ENCODE measurements at regions of chr15 and their contacts with region 1.

Region 1: GRCh38 chr15:76150971-76151598 is 91.3 kb downstream of the TMEM266 start:
- DNase-seq: peak; percentile 91
- H3K4me3 ChIP-seq: no peak overlapping the region
- H3K27ac ChIP-seq: peak overlapping the region; percentile 36
- H3K4me1 ChIP-seq: peaks cover 18% of the 10 kb centered on the region
- H3K27me3 ChIP-seq: no peaks in the 10 kb centered on the region
- CTCF ChIP-seq: peak; percentile 74 to 92

Region 2: DNA sequence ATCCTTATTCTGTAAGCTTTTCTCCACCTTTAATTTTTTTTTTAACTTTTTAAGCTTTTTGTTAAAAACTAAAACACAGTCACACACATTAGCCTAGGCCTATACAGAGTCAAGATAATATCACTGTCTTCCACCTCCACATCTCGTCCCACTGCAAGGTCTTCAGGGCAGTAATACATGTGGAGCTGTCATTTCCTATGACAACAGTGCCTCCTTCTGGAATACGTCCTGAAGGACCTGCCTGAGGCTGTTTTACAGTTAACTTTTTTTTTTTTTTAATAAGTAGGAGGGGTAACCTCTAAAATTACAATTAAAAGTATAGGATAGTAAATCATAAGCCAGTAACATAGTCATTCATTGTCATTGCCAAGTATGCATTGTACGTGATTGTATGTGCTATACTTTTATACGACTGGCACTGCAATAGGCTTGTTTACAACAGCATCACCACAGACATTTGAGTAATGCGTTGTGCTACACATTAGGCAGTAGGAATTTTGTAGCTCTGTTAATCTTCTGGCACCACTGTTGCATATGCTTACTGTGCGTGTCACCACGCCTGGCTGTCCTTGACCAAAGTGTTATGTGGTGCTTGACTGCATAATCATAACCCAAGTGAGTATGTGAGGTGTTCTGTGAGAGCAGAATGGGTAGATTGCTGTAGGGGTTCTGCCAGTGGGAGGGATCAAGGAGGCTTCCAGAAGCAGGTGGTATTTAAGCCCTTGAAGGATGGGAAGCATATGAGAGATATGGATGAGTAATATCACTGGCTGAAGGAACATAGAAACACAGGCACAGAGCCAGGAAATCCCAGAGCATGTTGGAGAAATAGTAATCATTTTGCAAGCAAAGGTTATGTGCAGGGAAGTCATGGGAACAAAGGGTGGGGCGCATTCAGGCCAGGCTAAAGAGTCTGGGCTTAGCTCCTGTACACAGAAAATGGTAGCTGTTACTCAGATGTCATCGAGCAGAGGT is 229.1 kb before region 1 on chr15:
- CTCF ChIA-PET with region 1: no interaction called
- dilution Hi-C with region 1: no loop called
- in situ Hi-C with region 1: loop called in 1 of 2 experiments (anchors 25 kb)
- intact Hi-C with region 1: loop called (anchors 5 kb)
- DNase-seq: peak; percentile 78
- H3K4me3 ChIP-seq: no peak overlapping the region
- H3K27ac ChIP-seq: no peak overlapping the region
- H3K4me1 ChIP-seq: peaks cover 29% of the 10 kb centered on the region
- H3K27me3 ChIP-seq: no peaks in the 10 kb centered on the region
- CTCF ChIP-seq: peak; percentile 32 to 33

Region 3: DNA sequence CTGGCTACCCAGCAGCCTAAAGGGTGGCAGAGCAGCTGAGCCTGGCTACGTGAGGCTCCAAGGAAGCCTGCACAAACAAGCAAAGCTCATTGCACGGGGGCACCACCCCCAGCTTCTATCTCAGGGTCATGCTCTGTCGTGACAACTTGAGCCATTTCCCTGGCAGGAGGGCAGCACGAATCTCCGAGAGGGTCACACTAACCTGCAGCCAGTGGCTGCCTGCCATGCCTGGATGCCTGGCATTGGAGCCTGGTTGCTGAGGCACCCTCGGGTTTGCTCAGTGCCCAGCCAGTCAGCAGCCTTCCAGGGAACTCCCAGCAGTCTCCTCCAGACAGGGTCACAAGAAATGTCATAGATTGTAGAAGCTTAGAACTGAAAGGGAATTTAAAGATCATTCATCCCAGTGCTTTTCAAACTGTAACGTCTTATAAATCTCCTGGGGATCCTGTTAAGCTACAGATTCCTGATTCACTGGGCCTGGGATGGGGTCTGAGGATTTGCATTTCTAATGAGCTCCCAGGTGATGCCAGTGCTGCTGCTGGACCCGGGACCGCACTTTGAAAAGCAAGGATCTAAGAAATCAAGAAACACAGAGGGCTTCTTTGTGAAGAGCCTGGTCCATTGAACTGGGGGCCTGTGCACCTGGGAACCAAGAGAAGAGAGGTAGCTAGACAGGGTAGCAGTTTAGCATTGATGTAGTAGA is 42.9 kb before region 1 on chr15:
- CTCF ChIA-PET with region 1: no interaction called
- dilution Hi-C with region 1: loop called (anchors 5 kb)
- in situ Hi-C with region 1: no loop called
- intact Hi-C with region 1: no loop called
- DNase-seq: no peak
- H3K4me3 ChIP-seq: no peak overlapping the region
- H3K27ac ChIP-seq: no peak overlapping the region
- H3K4me1 ChIP-seq: peaks cover 5% of the 10 kb centered on the region
- H3K27me3 ChIP-seq: no peaks in the 10 kb centered on the region
- CTCF ChIP-seq: no peak

Region 4: GRCh38 chr15:76177491-76178040 is 26.5 kb after region 1 on chr15:
- CTCF ChIA-PET with region 1: no interaction called
- dilution Hi-C with region 1: no loop called
- in situ Hi-C with region 1: no loop called
- intact Hi-C with region 1: loop called (anchors 1 kb)
- DNase-seq: peak; percentile 83
- H3K4me3 ChIP-seq: no peak overlapping the region
- H3K27ac ChIP-seq: peak overlapping the region; percentile 19
- H3K4me1 ChIP-seq: peaks cover 13% of the 10 kb centered on the region
- H3K27me3 ChIP-seq: no peaks in the 10 kb centered on the region
- CTCF ChIP-seq: no peak

Region 5: DNA sequence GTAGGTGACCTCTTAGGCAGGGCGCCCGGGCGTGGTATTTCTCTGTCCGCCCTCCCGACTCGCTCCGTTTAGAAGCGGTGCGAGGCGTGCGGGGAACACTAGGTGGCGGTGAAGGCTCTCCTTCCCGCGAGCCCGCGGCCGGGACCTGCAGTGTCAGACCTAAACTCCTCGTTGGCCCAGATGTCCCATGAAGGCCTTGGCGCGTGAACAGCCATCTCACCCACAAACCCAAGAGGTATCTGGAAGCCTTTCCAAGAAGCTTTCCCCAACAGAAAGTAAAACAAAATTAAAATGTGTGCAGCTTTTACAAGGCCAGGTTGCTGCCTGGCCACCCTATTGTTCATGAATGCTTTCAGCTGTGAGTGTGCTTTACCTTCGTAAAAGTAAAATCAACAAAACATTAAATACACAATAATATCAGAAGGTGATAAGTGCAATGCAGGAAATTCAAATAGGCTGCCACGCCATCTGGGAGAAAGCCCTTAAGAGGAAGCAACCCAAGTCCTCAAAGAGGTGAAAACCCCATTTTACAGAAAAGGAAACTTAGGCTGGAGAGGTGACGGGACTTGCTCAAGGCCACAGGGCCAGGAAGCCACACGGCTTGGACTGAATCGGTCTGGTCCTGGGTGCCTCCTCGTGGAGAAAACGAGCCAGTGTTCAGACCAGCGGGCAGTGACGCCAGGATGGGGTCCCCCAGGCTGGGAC is 39.9 kb after region 1 on chr15:
- CTCF ChIA-PET with region 1: no interaction called
- dilution Hi-C with region 1: no loop called
- in situ Hi-C with region 1: no loop called
- intact Hi-C with region 1: loop called (anchors 2 kb)
- DNase-seq: peak; percentile 61
- H3K4me3 ChIP-seq: peak overlapping the region in 1 of 3 experiments; percentile 52
- H3K27ac ChIP-seq: no peak overlapping the region
- H3K4me1 ChIP-seq: peaks cover 8% of the 10 kb centered on the region
- H3K27me3 ChIP-seq: no peaks in the 10 kb centered on the region
- CTCF ChIP-seq: peak; percentile 85 to 93

Region 6: GRCh38 chr15:76330080-76330680 is 179.1 kb after region 1 on chr15:
- CTCF ChIA-PET with region 1: interaction called, 3 read pairs
- dilution Hi-C with region 1: no loop called
- in situ Hi-C with region 1: no loop called
- intact Hi-C with region 1: loop called (anchors 1 kb)
- DNase-seq: peak; percentile 36
- H3K4me3 ChIP-seq: no peak overlapping the region
- H3K27ac ChIP-seq: no peak overlapping the region
- H3K4me1 ChIP-seq: peaks cover 2% of the 10 kb centered on the region
- H3K27me3 ChIP-seq: peaks cover 3% of the 10 kb centered on the region
- CTCF ChIP-seq: peak; percentile 46 to 63

Region 7: GRCh38 chr15:76866716-76867321 is 715.7 kb after region 1 on chr15:
- CTCF ChIA-PET with region 1: no interaction called
- dilution Hi-C with region 1: no loop called
- in situ Hi-C with region 1: no loop called
- intact Hi-C with region 1: loop called (anchors 1 kb)
- DNase-seq: peak; percentile 5
- H3K4me3 ChIP-seq: no peak overlapping the region
- H3K27ac ChIP-seq: no peak overlapping the region
- H3K4me1 ChIP-seq: no peaks in the 10 kb centered on the region
- H3K27me3 ChIP-seq: no peaks in the 10 kb centered on the region
- CTCF ChIP-seq: peak; percentile 30 to 51